Right ventricle myocardium inferior (tissue), 1 donor: ENCODE measurements at regions of chr16 and their contacts with region 1.

Region 1: DNA sequence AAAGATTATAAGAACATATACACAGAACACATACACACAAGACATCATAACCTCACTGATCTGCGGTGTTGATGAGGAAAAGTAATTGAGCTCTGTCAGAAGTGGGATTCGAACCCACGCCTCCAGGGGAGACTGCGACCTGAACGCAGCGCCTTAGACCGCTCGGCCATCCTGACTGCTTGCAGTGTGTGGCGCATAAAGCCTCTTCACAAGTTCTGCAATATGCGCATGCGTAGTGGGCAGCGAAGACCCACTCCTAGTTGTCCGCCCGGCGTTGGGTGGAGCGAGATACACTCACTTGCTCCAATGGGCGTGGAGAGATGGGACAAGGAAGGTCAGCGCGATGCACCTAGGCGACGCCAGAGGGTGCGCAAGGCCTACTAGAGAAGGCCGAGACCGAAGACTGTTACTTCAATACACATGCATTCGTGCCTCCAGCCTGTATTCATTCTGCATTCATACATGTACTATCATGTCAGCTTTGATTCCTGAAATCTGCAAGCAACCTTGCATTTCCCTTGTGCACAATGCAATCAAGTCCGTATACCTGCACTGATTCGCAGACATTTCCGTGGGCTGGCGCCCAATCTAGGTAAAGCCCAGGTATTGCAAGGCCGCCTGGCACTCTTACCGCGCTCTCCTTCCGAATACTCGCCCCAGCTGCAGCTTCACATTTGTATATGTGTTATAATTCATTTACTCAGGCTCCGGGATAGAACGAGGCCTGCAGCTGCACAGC is 16.1 kb upstream of the PLLP start:
- DNase-seq: peak; percentile 99
- ATAC-seq: peak; percentile 97

Region 2: DNA sequence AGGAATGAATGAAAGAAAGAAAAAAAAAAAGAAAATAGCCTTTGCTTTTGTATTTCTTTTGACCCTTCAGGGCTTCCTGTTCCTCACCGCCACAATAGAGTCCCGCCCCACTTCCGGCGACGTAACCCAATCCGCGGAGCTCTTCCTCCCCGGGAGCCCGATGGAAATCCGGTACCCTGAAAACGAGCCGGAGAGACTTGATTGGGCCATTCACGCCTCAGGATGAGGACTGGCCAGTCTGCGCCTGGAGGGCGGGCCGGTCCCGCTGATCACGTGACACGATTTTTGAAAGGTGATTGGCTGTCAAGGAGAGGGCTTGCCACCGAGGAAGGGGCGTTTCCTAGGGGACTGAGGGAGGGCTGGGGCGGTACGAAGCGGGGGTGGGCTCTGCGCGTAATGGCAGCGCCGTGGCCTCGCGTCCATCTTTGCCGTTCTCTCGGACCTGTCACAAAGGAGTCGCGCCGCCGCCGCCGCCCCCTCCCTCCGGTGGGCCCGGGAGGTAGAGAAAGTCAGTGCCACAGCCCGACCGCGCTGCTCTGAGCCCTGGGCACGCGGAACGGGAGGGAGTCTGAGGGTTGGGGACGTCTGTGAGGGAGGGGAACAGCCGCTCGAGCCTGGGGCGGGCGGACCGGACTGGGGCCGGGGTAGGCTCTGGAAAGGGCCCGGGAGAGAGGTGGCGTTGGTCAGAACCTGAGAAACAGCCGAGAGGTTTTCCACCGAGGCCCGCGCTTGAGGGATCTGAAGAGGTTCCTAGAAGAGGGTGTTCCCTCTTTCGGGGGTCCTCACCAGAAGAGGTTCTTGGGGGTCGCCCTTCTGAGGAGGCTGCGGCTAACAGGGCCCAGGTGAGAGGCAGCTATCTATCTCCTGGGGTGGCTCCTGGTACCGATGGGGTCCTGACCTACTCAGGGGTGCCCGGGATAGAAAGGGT is 114.3 kb before region 1 on chr16 and contains the starts of genes PSME3IP1 and RSPRY1:
- intact Hi-C with region 1: loop called (anchors 1 kb)
- DNase-seq: peak; percentile 98
- ATAC-seq: peak; percentile 99
- total RNA-seq, gene PSME3IP1: 54.2 TPM
- total RNA-seq, gene RSPRY1: 13.8 TPM

Region 3: DNA sequence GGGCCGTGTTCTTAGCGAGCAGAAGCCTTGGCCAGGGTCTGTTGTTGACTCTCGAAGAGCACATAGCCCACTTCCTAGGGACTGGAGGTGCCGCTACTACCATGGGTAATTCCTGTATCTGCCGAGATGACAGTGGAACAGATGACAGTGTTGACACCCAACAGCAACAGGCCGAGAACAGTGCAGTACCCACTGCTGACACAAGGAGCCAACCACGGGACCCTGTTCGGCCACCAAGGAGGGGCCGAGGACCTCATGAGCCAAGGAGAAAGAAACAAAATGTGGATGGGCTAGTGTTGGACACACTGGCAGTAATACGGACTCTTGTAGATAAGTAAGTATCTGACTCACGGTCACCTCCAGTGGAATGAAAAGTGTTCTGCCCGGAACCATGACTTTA is 95.9 kb before region 1 on chr16:
- intact Hi-C with region 1: no loop called
- DNase-seq: no peak
- ATAC-seq: no peak

Region 4: DNA sequence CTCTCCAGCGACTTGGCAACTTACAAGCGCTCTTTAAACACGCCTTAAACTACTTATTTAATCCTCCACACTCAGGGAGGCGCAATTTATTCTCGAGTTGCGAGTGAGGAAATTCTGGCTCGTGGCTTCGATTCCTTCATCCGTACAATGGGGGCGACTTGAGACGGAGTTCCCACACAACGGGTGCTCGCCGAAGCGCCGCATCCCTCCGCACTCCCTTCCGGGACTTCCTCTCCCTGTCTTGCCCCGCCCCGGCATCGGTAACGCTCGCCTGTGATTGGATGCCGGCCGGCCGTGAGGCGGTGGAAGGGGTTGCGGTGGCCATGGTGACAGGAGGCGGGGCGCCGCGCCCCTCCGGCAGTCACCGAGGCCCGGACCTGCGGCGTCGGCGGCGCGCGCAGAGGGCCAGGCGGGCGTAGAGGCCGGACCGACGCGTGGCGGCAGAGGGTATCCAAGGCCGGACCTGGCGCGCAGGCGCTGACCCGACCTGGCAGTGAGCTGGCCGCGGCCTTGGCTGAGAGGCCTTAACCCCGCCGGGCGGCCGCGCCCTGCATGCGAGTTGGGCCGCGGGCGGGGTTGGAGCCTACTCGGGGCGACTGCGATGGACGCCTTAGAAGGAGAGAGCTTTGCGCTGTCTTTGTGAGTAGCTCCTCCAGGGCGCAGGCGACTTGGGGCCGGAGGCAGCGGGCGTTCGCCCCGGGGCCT is 55.6 kb before region 1 on chr16 and contains the start of gene ARL2BP:
- intact Hi-C with region 1: loop called (anchors 2 kb)
- DNase-seq: peak; percentile 99
- ATAC-seq: peak; percentile 99
- total RNA-seq, gene ARL2BP: 64.1 TPM

Region 5: DNA sequence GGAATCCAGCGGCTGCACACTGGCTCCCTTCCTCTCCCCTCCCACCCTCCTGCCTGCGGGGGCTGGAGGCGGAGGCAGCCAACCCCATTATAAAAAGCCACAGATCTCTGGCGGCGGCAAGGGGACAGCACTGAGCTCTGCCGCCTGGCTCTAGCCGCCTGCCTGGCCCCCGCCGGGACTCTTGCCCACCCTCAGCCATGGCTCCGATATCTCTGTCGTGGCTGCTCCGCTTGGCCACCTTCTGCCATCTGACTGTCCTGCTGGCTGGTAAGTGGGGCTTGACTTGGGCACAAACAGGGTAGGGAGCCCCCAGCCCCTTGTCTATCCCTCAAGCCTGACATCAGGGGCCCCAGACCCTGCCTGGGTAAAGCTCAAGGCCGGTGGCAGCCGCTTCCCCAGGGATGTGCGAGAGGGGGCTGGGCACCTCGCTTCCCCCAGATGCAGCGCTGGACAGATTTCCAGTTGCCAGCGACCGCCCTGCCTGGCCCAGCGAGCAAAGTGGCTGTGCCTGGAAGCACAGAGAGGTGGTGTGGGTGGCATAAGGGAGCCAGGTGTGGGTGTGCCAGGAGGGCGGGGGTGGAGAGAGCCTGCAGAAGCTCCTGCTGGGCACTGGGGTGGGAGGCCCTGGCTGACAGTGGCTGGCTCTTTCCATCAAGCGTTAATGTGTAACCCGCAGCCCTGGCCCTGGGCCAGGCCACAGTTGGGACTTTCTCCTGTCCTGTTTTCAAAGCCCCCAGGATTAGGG is 72.0 kb after region 1 on chr16 and contains the start of gene CX3CL1:
- intact Hi-C with region 1: loop called (anchors 2 kb)
- DNase-seq: no peak
- ATAC-seq: peak; percentile 65
- total RNA-seq, gene CX3CL1: 15.2 TPM

Region 6: DNA sequence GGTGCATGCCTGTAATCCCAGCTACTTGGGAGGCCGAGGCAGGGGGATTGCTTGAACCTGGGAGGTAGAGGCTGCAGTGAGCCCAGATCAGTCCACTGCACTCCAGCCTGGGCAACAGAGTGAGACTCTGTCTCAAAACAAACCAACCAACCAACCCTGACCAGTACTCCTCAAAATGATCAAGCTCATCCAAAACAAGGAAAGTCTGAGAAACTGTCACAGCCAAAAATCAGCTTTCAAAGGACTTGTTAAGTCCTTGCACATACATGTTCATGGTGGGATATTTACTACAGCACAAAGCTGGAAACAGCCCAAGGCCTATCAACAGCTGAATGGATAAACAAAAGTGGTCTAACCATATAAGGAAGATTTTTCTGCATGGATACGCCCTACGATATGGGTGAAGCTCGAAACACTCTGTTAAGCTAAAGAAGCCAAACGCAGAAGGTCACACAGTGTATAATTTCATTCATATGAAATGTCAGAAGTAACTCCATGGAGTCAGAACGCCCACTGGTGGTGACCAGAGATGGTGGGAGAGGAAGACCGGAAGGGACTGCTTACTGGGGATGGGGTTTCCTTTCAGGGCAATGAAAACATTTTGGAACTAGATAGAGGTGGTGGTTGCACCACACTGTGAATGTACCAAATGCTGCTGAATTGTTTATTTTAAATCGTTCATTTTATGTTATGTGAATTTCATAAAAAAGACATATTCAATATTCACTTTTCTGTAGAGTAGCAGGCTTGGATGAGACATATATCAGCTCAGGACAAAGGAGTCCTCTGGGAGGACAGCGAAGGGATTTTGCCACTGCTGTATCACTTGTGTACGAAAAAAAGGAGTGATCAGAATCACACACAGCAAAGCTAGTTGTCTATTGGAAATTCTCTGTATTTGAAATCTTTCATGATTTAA is 121.7 kb after region 1 on chr16:
- intact Hi-C with region 1: loop called (anchors 1 kb)
- DNase-seq: no peak
- ATAC-seq: peak; percentile 49

Region 7: GRCh38 chr16:57519796-57520360 is 219.3 kb after region 1 on chr16:
- intact Hi-C with region 1: loop called (anchors 2 kb)
- DNase-seq: peak; percentile 90
- ATAC-seq: peak; percentile 76

Region 8: GRCh38 chr16:57535680-57536305 is 235.2 kb after region 1 on chr16:
- intact Hi-C with region 1: loop called (anchors 5 kb)
- DNase-seq: peak; percentile 95
- ATAC-seq: peak; percentile 97

Region 9: DNA sequence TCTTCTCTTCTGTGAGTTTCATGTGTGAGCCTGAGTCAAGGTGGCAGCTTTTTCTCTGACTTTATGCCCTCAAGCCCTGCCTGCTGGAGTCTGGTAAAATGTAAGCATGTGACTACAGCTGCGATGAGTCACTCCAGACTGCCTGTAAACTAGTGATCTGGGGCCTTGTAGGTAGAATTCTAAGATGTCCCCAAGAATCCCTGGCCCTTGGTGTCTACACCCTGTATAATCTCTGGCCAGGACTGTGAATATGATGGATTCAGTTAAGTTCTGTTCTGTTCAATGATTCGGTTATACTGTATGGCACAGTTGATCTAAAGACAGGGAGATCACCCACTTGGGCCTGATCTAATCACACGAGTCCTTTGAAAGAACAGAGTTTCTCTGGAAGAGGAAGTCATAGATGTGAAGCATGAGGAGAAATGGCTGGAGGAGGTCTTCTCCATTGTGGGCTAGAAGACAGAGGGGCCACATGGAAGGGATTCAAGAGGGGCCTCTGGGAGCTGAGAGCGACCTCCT is 964.5 kb after region 1 on chr16:
- intact Hi-C with region 1: no loop called
- DNase-seq: no peak
- ATAC-seq: no peak